ENCODE measurements at regions of chr1 and their contacts with region 1.

Region 1: DNA sequence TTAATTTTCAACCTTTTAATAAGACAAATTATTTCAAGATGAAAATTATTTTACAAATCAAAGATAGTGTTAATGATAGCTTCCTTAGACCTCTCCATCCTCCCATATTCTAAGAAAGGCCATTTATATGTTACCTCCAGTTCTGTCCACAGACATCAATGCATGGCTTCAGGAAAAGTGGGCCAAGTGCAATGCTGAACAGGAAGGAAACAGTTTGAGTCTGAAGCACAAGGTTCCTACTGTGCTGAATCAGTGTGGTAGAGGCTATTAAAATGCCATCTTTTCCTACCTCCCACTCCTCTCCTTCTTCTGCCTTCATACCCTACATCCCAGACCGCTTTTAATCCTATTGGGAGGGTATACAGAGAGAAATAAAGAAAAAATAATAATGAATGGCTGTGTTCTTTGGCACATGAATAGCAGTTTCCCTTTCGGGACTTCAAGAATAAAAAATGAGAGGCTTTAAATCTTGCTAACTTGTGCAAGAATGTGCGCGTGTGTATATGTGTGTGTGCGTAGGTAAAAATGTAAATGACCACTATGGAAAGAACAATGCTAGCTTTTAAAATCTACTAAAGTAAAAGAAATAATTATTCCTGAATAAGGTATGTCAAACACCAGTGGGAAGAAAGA is 62.6 kb upstream of the C1orf105 start:
- DNase-seq: peak in 1 of 5 donors; percentile 1
- H3K4me3 ChIP-seq: no peak overlapping the region
- H3K4me3 Mint-ChIP-seq: peak overlapping the region; percentile 65 to 88 (median 78)
- H3K27ac ChIP-seq: no peak overlapping the region
- H3K27ac Mint-ChIP-seq: peak overlapping the region; percentile 58 to 94 (median 93)
- H3K4me1 ChIP-seq: peaks cover 40% of the 10 kb centered on the region
- H3K4me1 Mint-ChIP-seq: peaks cover 20 to 51% (median 26%) of the 10 kb centered on the region in 3 donors
- H3K27me3 ChIP-seq: no peaks in the 10 kb centered on the region
- H3K27me3 Mint-ChIP-seq: no peaks in the 10 kb centered on the region

Region 2: GRCh38 chr1:171898941-171899340 is 458.9 kb before region 1 on chr1:
- CTCF ChIA-PET with region 1: no interaction called
- POLR2A ChIA-PET with region 1: no interaction called
- DNase-seq: no peak
- H3K4me3 ChIP-seq: no peak overlapping the region
- H3K4me3 Mint-ChIP-seq: no peak overlapping the region
- H3K27ac ChIP-seq: no peak overlapping the region
- H3K27ac Mint-ChIP-seq: no peak overlapping the region
- H3K4me1 ChIP-seq: no peaks in the 10 kb centered on the region
- H3K4me1 Mint-ChIP-seq: peaks cover 2 to 15% (median 9%) of the 10 kb centered on the region in 3 donors
- H3K27me3 ChIP-seq: no peaks in the 10 kb centered on the region
- H3K27me3 Mint-ChIP-seq: peaks cover 6 to 13% of the 10 kb centered on the region in 2 donors

Region 3: DNA sequence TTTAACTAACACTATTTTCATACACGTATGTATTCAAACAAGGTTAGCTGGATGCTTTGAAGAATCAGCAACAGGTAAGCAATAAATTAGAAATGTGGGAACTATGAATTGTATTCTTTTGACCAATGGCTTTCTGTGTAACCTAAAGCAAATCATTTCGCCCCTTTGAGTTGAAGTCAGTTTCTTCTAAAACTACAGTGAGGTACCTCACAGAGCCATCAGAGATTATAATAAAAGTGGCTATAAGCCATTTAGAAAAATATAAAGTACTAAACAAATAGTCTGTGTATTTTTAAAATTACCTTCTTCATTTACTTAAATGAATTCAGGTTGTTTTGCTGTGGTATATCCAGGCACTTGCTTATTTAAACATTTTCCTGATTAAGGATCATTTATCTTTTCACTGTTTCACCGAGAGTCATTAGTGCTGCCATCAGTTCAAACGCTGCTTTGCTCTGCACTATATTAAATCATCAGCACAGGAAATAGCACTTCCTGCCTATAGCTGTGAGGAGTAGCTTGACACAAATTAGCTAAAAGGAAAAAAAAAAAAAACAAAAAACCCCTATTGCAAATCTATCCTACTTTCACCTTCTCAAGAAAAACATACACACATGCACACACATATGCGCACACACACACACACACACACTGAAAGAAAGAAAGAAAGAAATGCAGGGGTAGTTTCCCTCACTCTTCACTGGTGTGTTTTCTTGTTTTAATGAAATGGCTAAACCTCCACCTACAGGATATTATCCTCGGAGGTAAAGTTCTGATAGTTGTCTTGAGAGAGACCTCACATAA is 22.8 kb after region 1 on chr1:
- CTCF ChIA-PET with region 1: interaction called, 14 read pairs
- POLR2A ChIA-PET with region 1: interaction called, 15 read pairs
- DNase-seq: peak in 4 of 5 donors; percentile 3 to 55 (median 54)
- H3K4me3 ChIP-seq: peak overlapping the region; percentile 9
- H3K4me3 Mint-ChIP-seq: peak overlapping the region; percentile 49 to 82 (median 73)
- H3K27ac ChIP-seq: no peak overlapping the region
- H3K27ac Mint-ChIP-seq: peak overlapping the region; percentile 54 to 96 (median 84)
- H3K4me1 ChIP-seq: peaks cover 21% of the 10 kb centered on the region
- H3K4me1 Mint-ChIP-seq: peaks cover 25 to 45% (median 41%) of the 10 kb centered on the region in 3 donors
- H3K27me3 ChIP-seq: no peaks in the 10 kb centered on the region
- H3K27me3 Mint-ChIP-seq: no peaks in the 10 kb centered on the region

Region 4: GRCh38 chr1:172405912-172406311 is 48.0 kb after region 1 on chr1:
- CTCF ChIA-PET with region 1: no interaction called
- POLR2A ChIA-PET with region 1: no interaction called
- DNase-seq: no peak
- H3K4me3 ChIP-seq: no peak overlapping the region
- H3K4me3 Mint-ChIP-seq: no peak overlapping the region
- H3K27ac ChIP-seq: no peak overlapping the region
- H3K27ac Mint-ChIP-seq: no peak overlapping the region
- H3K4me1 ChIP-seq: peaks cover 7% of the 10 kb centered on the region
- H3K4me1 Mint-ChIP-seq: peaks cover 13 to 20% (median 16%) of the 10 kb centered on the region in 3 donors
- H3K27me3 ChIP-seq: no peaks in the 10 kb centered on the region
- H3K27me3 Mint-ChIP-seq: no peaks in the 10 kb centered on the region

Measured in CD8-positive, alpha-beta memory T cell (primary cell).